HepG2 (cell line): ENCODE measurements at regions of chr5 and their contacts with region 1.

Region 1: GRCh38 chr5:98583586-98583985 is 189.9 kb upstream of the RGMB start:
- DNase-seq: no peak
- ATAC-seq: no peak
- H3K4me3 ChIP-seq: no peak overlapping the region
- H3K27ac ChIP-seq: no peak overlapping the region
- H3K4me1 ChIP-seq: no peaks in the 10 kb centered on the region
- H3K27me3 ChIP-seq: no peaks in the 10 kb centered on the region
- CTCF ChIP-seq: no peak
- EP300 ChIP-seq: no peak
- POLR2A ChIP-seq: no peak
- RAD21 ChIP-seq: no peak

Region 2: DNA sequence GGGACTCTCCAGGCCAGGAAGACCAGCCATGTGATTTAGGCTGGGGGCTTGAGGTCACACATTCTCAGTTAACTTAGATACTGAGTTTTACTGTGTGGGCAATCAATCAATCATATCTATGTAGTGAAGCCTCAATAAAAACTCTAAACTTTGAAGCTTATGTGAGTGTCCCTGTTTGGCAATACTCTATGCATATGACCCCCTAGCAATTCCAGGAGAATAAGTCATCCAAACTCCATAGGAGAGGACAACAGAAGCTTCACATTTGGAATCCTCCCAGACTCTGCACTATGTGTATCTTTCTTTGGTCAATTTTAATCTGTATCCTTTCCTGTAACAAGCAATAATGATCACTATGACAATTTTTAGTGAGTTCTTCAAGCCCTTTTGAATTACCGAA is 26.9 kb before region 1 on chr5:
- CTCF ChIA-PET with region 1: no interaction called
- POLR2A ChIA-PET with region 1: no interaction called
- in situ Hi-C with region 1: no loop called
- intact Hi-C with region 1: no loop called
- DNase-seq: no peak
- ATAC-seq: no peak
- H3K4me3 ChIP-seq: no peak overlapping the region
- H3K27ac ChIP-seq: no peak overlapping the region
- H3K4me1 ChIP-seq: no peaks in the 10 kb centered on the region
- H3K27me3 ChIP-seq: no peaks in the 10 kb centered on the region
- CTCF ChIP-seq: no peak
- EP300 ChIP-seq: no peak
- POLR2A ChIP-seq: no peak
- RAD21 ChIP-seq: no peak

Region 3: DNA sequence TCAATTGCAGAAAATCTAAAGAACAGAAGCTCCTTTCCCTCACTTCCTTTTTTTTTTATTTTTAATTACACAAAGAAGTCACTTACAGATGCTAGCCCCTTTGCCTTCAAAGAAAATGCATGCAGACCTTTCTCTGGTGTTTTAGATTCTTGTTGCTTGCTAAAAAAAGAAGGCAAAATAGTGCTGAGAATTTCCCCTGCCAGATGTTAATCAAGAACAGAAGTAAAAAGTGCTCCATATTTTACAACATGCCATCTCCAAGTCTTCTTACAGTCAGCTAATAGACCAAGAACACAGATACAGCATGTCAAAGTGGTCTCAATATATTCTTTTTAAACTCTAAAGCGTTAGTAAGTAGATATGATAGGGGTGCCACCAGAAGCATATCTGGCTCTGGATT is 47.0 kb after region 1 on chr5:
- CTCF ChIA-PET with region 1: no interaction called
- POLR2A ChIA-PET with region 1: no interaction called
- in situ Hi-C with region 1: no loop called
- intact Hi-C with region 1: loop called (anchors 1 kb)
- DNase-seq: no peak
- ATAC-seq: no peak
- H3K4me3 ChIP-seq: no peak overlapping the region
- H3K27ac ChIP-seq: no peak overlapping the region
- H3K4me1 ChIP-seq: no peaks in the 10 kb centered on the region
- H3K27me3 ChIP-seq: no peaks in the 10 kb centered on the region
- CTCF ChIP-seq: no peak
- EP300 ChIP-seq: no peak
- POLR2A ChIP-seq: no peak
- RAD21 ChIP-seq: no peak